B cell (primary cell): ENCODE measurements at regions of chrX and their contacts with region 1.

Region 1: GRCh38 chrX:154370882-154371770 is 3.3 kb downstream of the FLNA start:
- DNase-seq: peak; percentile 94
- ATAC-seq: peak; percentile 63
- H3K4me3 ChIP-seq: peak overlapping the region; percentile 24 to 81 (median 75)
- H3K4me3 Mint-ChIP-seq: peak overlapping the region; percentile 85
- H3K27ac ChIP-seq: peak overlapping the region; percentile 60 to 86
- H3K27ac Mint-ChIP-seq: peak overlapping the region; percentile 88
- H3K4me1 ChIP-seq: peaks cover 32 to 56% of the 10 kb centered on the region in 2 donors
- H3K4me1 Mint-ChIP-seq: peaks cover 25% of the 10 kb centered on the region
- H3K27me3 ChIP-seq: no peaks in the 10 kb centered on the region
- H3K27me3 Mint-ChIP-seq: no peaks in the 10 kb centered on the region
- CTCF ChIP-seq: no peak

Region 2: GRCh38 chrX:154413136-154413535 is 42.0 kb after region 1 on chrX:
- CTCF ChIA-PET with region 1: no interaction called
- POLR2A ChIA-PET with region 1: no interaction called
- intact Hi-C with region 1: no loop called
- DNase-seq: no peak
- ATAC-seq: no peak
- H3K4me3 ChIP-seq: no peak overlapping the region
- H3K4me3 Mint-ChIP-seq: peak overlapping the region; percentile 79
- H3K27ac ChIP-seq: peak overlapping the region; percentile 73 to 79
- H3K27ac Mint-ChIP-seq: no peak overlapping the region
- H3K4me1 ChIP-seq: peaks cover 8 to 38% of the 10 kb centered on the region in 2 donors
- H3K4me1 Mint-ChIP-seq: peaks cover 31% of the 10 kb centered on the region
- H3K27me3 ChIP-seq: no peaks in the 10 kb centered on the region
- H3K27me3 Mint-ChIP-seq: no peaks in the 10 kb centered on the region
- CTCF ChIP-seq: no peak

Region 3: GRCh38 chrX:154515878-154516655 is 144.9 kb after region 1 on chrX and contains the start of gene FAM3A:
- CTCF ChIA-PET with region 1: no interaction called
- POLR2A ChIA-PET with region 1: no interaction called
- intact Hi-C with region 1: loop called (anchors 5 kb)
- DNase-seq: peak; percentile 89
- ATAC-seq: peak; percentile 97
- H3K4me3 ChIP-seq: peak within 1 kb of the TSS; percentile 36 to 75 (median 67)
- H3K4me3 Mint-ChIP-seq: peak within 1 kb of the TSS; percentile 89
- H3K27ac ChIP-seq: peak within 1 kb of the TSS; percentile 71 to 73
- H3K27ac Mint-ChIP-seq: peak within 1 kb of the TSS; percentile 94
- H3K4me1 ChIP-seq: peaks cover 4 to 22% of the 10 kb centered on the region in 2 donors
- H3K4me1 Mint-ChIP-seq: peaks cover 18% of the 10 kb centered on the region
- H3K27me3 ChIP-seq: no peaks in the 10 kb centered on the region
- H3K27me3 Mint-ChIP-seq: no peaks in the 10 kb centered on the region
- CTCF ChIP-seq: no peak
- total RNA-seq, gene FAM3A: 39.6 and 43.3 TPM in 2 replicates

Region 4: DNA sequence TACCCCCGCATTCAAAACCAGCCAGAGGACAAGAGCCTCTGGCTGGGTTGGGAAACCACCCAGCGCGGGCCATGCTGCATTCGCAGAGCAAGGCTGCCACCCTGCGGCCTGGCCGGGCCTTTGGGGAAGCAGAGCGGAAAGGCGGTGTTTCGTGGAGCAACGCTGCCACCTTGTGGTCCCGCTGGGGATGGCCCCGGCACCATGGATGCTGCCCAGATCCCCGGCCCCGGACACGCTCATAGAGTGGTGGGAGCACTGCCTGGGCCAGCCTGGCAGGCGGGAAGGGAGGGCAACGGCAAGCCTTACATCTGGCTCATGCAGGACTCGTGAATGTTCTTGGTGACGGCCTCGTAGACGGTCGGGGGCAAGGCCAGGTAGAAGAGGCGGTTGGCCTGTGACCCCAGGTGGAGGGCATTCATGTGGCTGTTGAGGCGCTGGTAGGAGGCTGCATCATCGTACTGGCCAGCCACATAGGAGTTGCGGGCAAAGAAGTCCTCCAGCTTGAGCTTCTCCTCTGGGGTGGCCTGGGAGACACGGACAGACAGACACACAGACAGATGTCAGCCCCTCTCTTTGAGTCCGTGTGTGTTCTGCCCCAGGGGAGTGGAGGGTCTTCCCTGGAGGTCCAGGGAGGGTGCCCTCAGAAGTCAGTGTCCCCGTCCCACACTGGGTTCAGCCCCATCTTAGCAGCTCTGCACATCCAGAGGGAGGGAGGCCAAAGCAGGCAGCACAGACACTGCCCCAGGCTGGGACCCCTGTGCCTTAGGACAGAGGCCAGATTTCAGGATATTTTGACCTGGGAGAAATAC is 163.9 kb after region 1 on chrX:
- CTCF ChIA-PET with region 1: interaction called, 45 read pairs
- POLR2A ChIA-PET with region 1: interaction called, 8 read pairs
- intact Hi-C with region 1: loop called (anchors 1 kb)
- DNase-seq: peak; percentile 88
- ATAC-seq: peak; percentile 99
- H3K4me3 ChIP-seq: no peak overlapping the region
- H3K4me3 Mint-ChIP-seq: no peak overlapping the region
- H3K27ac ChIP-seq: peak overlapping the region in 1 of 2 donors; percentile 44
- H3K27ac Mint-ChIP-seq: peak overlapping the region; percentile 74
- H3K4me1 ChIP-seq: peaks cover 4 to 8% of the 10 kb centered on the region in 2 donors
- H3K4me1 Mint-ChIP-seq: peaks cover 5% of the 10 kb centered on the region
- H3K27me3 ChIP-seq: no peaks in the 10 kb centered on the region
- H3K27me3 Mint-ChIP-seq: no peaks in the 10 kb centered on the region
- CTCF ChIP-seq: peak; percentile 86

Region 5: GRCh38 chrX:154890990-154891639 is 520.0 kb after region 1 on chrX:
- CTCF ChIA-PET with region 1: no interaction called
- POLR2A ChIA-PET with region 1: no interaction called
- intact Hi-C with region 1: no loop called
- DNase-seq: no peak
- ATAC-seq: no peak
- H3K4me3 ChIP-seq: no peak overlapping the region
- H3K4me3 Mint-ChIP-seq: no peak overlapping the region
- H3K27ac ChIP-seq: no peak overlapping the region
- H3K27ac Mint-ChIP-seq: no peak overlapping the region
- H3K4me1 ChIP-seq: no peaks in the 10 kb centered on the region
- H3K4me1 Mint-ChIP-seq: peaks cover 5% of the 10 kb centered on the region
- H3K27me3 ChIP-seq: no peaks in the 10 kb centered on the region
- H3K27me3 Mint-ChIP-seq: no peaks in the 10 kb centered on the region
- CTCF ChIP-seq: no peak

Region 6: GRCh38 chrX:155094468-155095061 is 723.4 kb after region 1 on chrX:
- CTCF ChIA-PET with region 1: no interaction called
- POLR2A ChIA-PET with region 1: no interaction called
- intact Hi-C with region 1: no loop called
- DNase-seq: peak; percentile 53
- ATAC-seq: peak; percentile 47
- H3K4me3 ChIP-seq: no peak overlapping the region
- H3K4me3 Mint-ChIP-seq: no peak overlapping the region
- H3K27ac ChIP-seq: no peak overlapping the region
- H3K27ac Mint-ChIP-seq: no peak overlapping the region
- H3K4me1 ChIP-seq: no peaks in the 10 kb centered on the region
- H3K4me1 Mint-ChIP-seq: no peaks in the 10 kb centered on the region
- H3K27me3 ChIP-seq: no peaks in the 10 kb centered on the region
- H3K27me3 Mint-ChIP-seq: no peaks in the 10 kb centered on the region
- CTCF ChIP-seq: peak; percentile 69